ENCODE measurements at regions of chr19 and their contacts with region 1.

Region 1: GRCh38 chr19:43950834-43951645 is at the start of gene ZNF221:
- DNase-seq: peak; percentile 91 to 95 (median 93)
- ATAC-seq: peak; percentile 98 to 100 (median 100)
- H3K4me3 ChIP-seq: peak within 1 kb of the TSS; percentile 57 to 95 (median 78)
- H3K27ac ChIP-seq: peak within 1 kb of the TSS; percentile 18 to 85 (median 75)
- H3K4me1 ChIP-seq: peaks cover 0 to 5% (median 0%) of the 10 kb centered on the region in 12 donors
- H3K27me3 ChIP-seq: no peaks in the 10 kb centered on the region
- CTCF ChIP-seq: peak; percentile 19 to 75 (median 44)
- POLR2A ChIP-seq: no peak
- total RNA-seq, gene ZNF221: 2.6 to 6.7 (median 3.9) TPM

Region 2: DNA sequence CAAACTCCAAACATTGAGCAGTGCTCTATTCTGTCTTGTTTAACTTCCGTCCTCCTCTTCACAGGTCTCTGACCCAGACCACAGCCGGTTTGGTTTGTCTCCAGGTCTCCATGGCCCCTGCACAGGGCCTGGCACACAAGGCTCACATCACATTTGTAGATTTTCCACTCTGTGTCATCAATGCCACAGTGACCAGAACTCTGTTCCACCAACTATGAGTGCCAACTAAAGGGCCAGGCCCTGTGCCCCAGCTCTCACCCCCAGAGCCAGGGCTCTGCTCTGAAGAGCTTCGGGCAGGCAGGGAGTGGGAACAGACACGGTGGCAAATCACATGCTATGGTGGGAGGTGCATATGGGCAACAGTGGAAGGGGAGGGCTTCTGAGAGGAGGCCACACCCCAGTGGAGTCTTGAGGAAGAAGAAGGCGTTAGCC is 212.2 kb before region 1 on chr19:
- intact Hi-C with region 1: no loop called
- DNase-seq: no peak
- ATAC-seq: peak in 2 of 4 donors; percentile 25 to 53
- H3K4me3 ChIP-seq: no peak overlapping the region
- H3K27ac ChIP-seq: no peak overlapping the region
- H3K4me1 ChIP-seq: peaks cover 0 to 11% (median 3%) of the 10 kb centered on the region in 12 donors
- H3K27me3 ChIP-seq: no peaks in the 10 kb centered on the region
- CTCF ChIP-seq: no peak
- POLR2A ChIP-seq: no peak

Region 3: GRCh38 chr19:43901395-43902390 is 49.3 kb before region 1 on chr19:
- intact Hi-C with region 1: loop called in 1 of 10 experiments (anchors 5 kb)
- DNase-seq: peak; percentile 88 to 91 (median 89)
- ATAC-seq: peak; percentile 98 to 100 (median 100)
- H3K4me3 ChIP-seq: peak overlapping the region; percentile 45 to 82 (median 64)
- H3K27ac ChIP-seq: peak overlapping the region in 9 of 12 donors; percentile 38 to 66 (median 55)
- H3K4me1 ChIP-seq: peaks cover 0 to 21% (median 8%) of the 10 kb centered on the region in 12 donors
- H3K27me3 ChIP-seq: no peaks in the 10 kb centered on the region
- CTCF ChIP-seq: no peak
- POLR2A ChIP-seq: no peak

Region 4: DNA sequence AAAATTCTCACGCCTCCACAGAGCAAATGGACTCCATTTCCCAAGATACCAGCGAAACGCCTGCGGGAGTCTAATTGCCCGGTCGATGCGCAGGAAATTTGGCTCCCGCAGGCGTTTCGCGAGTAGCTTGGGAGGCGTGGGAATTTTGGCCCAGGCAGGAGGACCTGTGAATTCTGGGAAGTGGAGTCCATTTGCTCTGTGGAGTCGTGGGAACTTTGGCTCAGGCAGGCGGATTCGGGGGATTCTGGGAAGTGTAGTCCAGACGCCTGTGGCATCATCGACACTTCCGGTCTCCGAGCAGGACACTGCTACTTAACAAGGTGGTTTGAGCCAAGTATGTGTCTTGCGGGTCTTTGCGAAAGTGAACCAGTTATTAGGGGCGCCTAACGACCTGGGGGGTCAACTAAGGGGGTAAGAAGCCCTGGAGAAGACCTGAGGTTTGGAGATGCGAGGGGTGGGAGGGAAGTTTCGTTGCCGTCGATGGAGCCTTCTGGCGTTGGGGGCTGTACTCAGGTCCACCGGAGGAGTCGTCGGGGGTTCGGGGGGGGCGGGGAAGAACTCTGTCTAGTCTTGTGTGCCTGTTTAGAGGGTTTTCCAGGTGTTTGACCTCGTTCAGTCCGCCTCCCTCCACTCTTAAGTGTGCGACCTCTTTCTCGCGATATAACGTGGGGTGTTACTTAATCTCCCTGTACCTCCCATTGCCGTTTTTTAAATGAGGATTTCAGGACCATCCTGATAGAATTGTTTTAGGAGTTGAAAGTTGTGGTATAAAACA is 33.1 kb after region 1 on chr19 and contains the start of gene ZNF155:
- intact Hi-C with region 1: loop called in 3 of 10 experiments (anchors 1 kb)
- DNase-seq: peak; percentile 92 to 97 (median 96)
- ATAC-seq: peak; percentile 99 to 100 (median 100)
- H3K4me3 ChIP-seq: peak within 1 kb of the TSS; percentile 51 to 89 (median 72)
- H3K27ac ChIP-seq: peak within 1 kb of the TSS in 11 of 12 donors; percentile 63 to 91 (median 76)
- H3K4me1 ChIP-seq: peaks cover 0 to 15% (median 7%) of the 10 kb centered on the region in 12 donors
- H3K27me3 ChIP-seq: no peaks in the 10 kb centered on the region
- CTCF ChIP-seq: no peak
- POLR2A ChIP-seq: no peak
- total RNA-seq, gene ZNF155: 4.0 to 7.7 (median 6.6) TPM

Region 5: DNA sequence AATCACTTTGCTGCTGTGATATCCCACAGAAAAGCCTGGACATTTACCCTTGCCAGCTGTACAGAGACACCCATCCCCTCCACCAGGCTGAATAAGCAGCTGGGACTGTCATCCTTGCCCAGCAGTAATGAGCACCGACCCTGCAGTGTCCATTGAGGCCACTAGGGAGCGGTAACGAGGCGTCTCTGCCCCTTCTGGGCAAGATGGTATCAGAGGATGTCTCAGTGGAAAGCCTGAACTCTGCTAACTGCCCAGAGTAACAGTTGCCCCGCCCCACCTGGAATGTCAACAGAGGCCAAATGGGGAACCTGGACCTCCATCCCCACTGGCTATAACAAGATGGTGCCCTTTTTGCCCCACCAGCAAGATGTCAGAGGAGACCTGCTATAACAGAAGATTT is 601.3 kb after region 1 on chr19:
- intact Hi-C with region 1: no loop called
- DNase-seq: no peak
- ATAC-seq: no peak
- H3K4me3 ChIP-seq: no peak overlapping the region
- H3K27ac ChIP-seq: no peak overlapping the region
- H3K4me1 ChIP-seq: no peaks in the 10 kb centered on the region
- H3K27me3 ChIP-seq: no peaks in the 10 kb centered on the region
- CTCF ChIP-seq: peak in 7 of 12 donors; percentile 16 to 53 (median 34)
- POLR2A ChIP-seq: no peak

Measured in heart left ventricle (tissue), 16 donors.